Mucosa of descending colon (tissue), 3 donors: ENCODE measurements at regions of chr9 and their contacts with region 1.

Region 1: GRCh38 chr9:95127249-95128176 is 190.0 kb downstream of the FANCC start:
- DNase-seq: peak; percentile 82 to 92 (median 90)
- ATAC-seq: peak; percentile 92
- H3K4me3 ChIP-seq: no peak overlapping the region
- H3K4me1 ChIP-seq: no peaks in the 10 kb centered on the region
- CTCF ChIP-seq: peak; percentile 95

Region 2: DNA sequence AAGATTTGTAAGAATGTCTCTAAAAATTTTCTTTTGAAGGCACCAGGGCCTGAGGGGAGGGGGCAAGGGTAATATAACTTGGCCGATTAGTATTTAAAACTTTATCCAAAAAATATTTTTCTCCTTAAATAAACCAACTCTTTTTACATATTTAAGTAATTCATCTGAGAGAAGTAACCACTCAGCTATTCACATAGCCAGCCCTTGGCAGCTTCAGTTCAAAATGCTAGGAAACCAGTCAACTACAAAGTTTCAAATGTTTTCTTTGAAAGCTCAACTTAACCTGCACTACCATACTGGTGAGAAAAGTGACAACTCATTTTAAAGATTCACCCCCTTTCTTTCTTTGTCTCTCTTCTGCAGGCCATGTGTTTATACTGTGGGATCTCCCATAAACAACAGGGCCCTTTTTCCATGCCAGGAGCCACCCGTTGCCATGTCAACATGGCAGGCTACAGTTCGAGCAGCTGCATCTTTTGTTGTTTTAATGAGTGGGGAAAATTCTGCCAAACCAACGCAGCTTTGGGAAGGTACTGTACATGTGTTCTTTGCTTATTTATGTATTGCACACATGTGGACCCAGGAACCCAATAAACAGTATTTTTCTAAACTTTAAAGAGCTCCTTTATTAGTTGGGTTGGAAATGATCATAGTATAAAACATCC is 354.7 kb before region 1 on chr9:
- intact Hi-C with region 1: loop called in 1 of 2 experiments (anchors 10 kb)
- DNase-seq: no peak
- ATAC-seq: no peak
- H3K4me3 ChIP-seq: no peak overlapping the region
- H3K4me1 ChIP-seq: no peaks in the 10 kb centered on the region
- CTCF ChIP-seq: no peak

Region 3: DNA sequence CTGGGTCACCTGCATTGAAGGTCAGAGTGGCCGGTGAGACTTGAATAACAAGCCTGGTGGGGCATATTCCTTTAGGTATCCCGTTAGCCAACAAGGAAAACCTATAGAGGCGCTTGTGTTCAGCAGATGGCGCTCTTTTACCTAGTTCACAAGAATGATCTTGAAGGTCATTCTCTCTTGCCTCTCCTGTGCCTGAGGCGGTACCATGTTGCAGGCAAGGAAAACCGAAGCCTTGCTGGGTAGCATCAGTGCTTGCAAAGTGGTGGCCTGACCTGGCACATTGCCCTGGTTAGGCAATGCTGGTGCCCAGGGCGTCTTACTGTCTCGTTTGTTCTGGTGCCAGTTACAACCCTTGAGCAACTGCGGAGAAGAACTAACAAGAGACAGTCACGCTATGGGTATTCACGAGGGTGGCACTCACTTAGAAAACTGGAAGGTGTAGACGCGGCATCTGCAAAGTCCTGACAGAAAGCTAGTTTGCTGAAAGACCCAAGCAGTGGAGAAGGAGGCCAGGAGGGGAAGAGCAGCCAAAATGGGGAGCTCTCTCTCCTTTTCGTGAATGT is 344.3 kb before region 1 on chr9:
- intact Hi-C with region 1: loop called (anchors 5 to 10 kb)
- DNase-seq: peak; percentile 53 to 90 (median 60)
- ATAC-seq: peak; percentile 96
- H3K4me3 ChIP-seq: no peak overlapping the region
- H3K4me1 ChIP-seq: no peaks in the 10 kb centered on the region
- CTCF ChIP-seq: no peak